PC-3 (cell line): ENCODE measurements at regions of chr16 and their contacts with region 1.

Region 1: GRCh38 chr16:84071121-84071520 is 28.5 kb upstream of the SLC38A8 start:
- DNase-seq: no peak
- ATAC-seq: no peak
- H3K4me3 ChIP-seq: no peak overlapping the region
- H3K27ac ChIP-seq: no peak overlapping the region
- H3K4me1 ChIP-seq: no peaks in the 10 kb centered on the region
- H3K27me3 ChIP-seq: no peaks in the 10 kb centered on the region
- CTCF ChIP-seq: no peak

Region 2: GRCh38 chr16:84132527-84133285 is 61.6 kb after region 1 on chr16:
- CTCF ChIA-PET with region 1: no interaction called
- POLR2A ChIA-PET with region 1: interaction called, 16 read pairs
- intact Hi-C with region 1: no loop called
- DNase-seq: no peak
- ATAC-seq: no peak
- H3K4me3 ChIP-seq: no peak overlapping the region
- H3K27ac ChIP-seq: no peak overlapping the region
- H3K4me1 ChIP-seq: no peaks in the 10 kb centered on the region
- H3K27me3 ChIP-seq: no peaks in the 10 kb centered on the region
- CTCF ChIP-seq: no peak